AG04449 (cell line): ENCODE measurements at regions of chr1 and their contacts with region 1.

Region 1: DNA sequence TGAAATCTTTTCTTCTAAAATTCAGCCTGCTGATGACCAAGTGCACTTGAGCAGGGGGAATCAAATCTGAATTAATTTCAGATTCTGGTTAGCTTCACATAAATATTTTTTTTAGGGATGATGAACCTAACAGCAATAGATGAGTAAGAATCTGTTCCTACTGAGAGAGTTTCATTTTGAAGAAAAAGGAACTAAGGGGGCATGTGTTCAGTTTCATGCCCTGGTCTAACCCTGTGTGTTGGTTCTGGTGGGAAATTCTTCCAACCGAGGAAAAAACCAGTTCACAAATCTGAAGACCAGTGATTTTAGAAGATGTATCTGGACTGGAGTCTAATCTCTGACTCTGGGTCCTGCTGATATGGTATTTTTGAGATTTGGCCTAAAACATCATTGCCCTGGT is 13.7 kb downstream of the SELL start:
- DNase-seq: no peak
- H3K4me3 ChIP-seq: no peak overlapping the region
- CTCF ChIP-seq: no peak

Region 2: GRCh38 chr1:169711469-169712281 is 13.9 kb after region 1 on chr1 and contains the start of gene SELL:
- CTCF ChIA-PET with region 1: interaction called, 11 read pairs
- POLR2A ChIA-PET with region 1: no interaction called
- DNase-seq: peak; percentile 21
- H3K4me3 ChIP-seq: peak within 1 kb of the TSS; percentile 41
- CTCF ChIP-seq: peak; percentile 70